Activated T-helper 2 cell treated with anti-CD3 and anti-CD28 coated beads, Interferon-gamma antibody, Interleukin-2, Interleukin-4, amounts not matched to agents 10 μg/mL and 5 μg/mL and 100 μg/mL, durations not matched to agents 14 hours and 24 hours and 36 hours (primary cell): ENCODE measurements at regions of chr7 and their contacts with region 1.

Region 1: DNA sequence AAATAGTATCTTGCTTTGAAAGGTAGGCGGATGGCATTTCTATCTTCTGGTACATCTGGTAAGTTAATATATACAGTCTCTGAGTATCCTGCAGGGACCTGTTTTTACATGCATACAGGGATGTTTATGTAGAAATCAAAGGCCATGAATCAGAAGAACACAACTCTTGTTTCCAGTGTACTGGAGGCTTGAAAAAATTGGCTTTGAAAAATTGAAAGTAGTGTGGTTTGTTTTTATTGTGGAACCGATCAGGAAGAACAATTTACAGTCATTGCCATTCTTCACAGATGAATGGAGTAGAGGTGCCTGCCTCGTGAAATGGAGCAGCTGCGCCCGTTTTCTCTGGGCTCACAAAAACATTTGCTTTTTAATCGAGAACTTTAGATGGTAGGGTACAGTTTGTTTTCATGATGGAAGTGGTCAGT is 54.0 kb upstream of the RPA3 start:
- DNase-seq: no peak
- H3K4me3 Mint-ChIP-seq: peak overlapping the region; percentile 40
- H3K27ac Mint-ChIP-seq: no peak overlapping the region
- H3K4me1 Mint-ChIP-seq: peaks cover 19% of the 10 kb centered on the region
- H3K27me3 Mint-ChIP-seq: no peaks in the 10 kb centered on the region

Region 2: DNA sequence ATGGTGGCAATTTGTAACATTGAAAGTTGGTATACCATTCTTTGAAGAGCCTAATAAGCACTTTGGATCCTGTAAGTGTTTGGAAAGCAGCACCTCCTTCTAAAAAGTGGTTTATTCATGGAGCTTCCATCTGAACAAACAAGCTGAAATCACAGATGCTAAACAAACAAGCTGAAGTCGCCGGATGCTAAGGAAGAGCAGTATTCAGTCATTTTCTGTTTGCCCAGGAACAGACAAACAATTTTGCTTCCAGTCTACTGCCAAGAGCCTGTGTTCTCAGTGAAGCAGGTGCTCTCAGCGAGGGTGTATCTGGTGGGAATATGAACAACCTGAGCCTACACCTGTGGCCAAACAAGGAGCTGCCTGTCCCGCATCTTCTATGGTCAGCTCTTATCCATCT is 243.1 kb before region 1 on chr7:
- intact Hi-C with region 1: no loop called
- DNase-seq: no peak
- H3K4me3 Mint-ChIP-seq: no peak overlapping the region
- H3K27ac Mint-ChIP-seq: no peak overlapping the region
- H3K4me1 Mint-ChIP-seq: no peaks in the 10 kb centered on the region
- H3K27me3 Mint-ChIP-seq: peaks cover 15% of the 10 kb centered on the region

Region 3: DNA sequence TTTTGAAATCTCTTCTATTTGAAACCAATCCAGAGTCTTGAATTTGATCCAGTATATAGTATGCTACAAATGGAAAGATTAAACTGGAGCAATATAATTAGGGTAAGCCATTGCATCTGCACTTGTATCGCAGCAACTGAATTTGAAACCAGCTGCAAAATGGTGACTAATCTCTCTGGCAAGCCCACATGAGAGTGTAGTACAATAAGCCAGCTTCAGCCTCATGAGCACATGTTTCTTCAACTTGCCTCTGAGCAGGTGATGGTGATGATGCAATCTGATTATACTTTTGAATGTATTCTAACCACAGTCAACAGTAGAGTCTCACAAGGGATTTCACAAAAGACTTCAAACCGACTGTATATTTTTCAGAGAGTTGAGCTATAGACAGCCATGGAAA is 53.2 kb before region 1 on chr7:
- intact Hi-C with region 1: loop called (anchors 2 kb)
- DNase-seq: peak; percentile 45
- H3K4me3 Mint-ChIP-seq: no peak overlapping the region
- H3K27ac Mint-ChIP-seq: peak overlapping the region; percentile 47
- H3K4me1 Mint-ChIP-seq: peaks cover 23% of the 10 kb centered on the region
- H3K27me3 Mint-ChIP-seq: no peaks in the 10 kb centered on the region

Region 4: GRCh38 chr7:7789551-7789988 is 17.2 kb after region 1 on chr7:
- intact Hi-C with region 1: loop called (anchors 1 kb)
- DNase-seq: no peak
- H3K4me3 Mint-ChIP-seq: no peak overlapping the region
- H3K27ac Mint-ChIP-seq: no peak overlapping the region
- H3K4me1 Mint-ChIP-seq: peaks cover 20% of the 10 kb centered on the region
- H3K27me3 Mint-ChIP-seq: no peaks in the 10 kb centered on the region

Region 5: GRCh38 chr7:7996576-7996975 is 224.2 kb after region 1 on chr7:
- intact Hi-C with region 1: no loop called
- DNase-seq: no peak
- H3K4me3 Mint-ChIP-seq: no peak overlapping the region
- H3K27ac Mint-ChIP-seq: peak overlapping the region; percentile 1
- H3K4me1 Mint-ChIP-seq: peaks cover 14% of the 10 kb centered on the region
- H3K27me3 Mint-ChIP-seq: no peaks in the 10 kb centered on the region

Region 6: GRCh38 chr7:8042796-8043535 is 270.6 kb after region 1 on chr7:
- intact Hi-C with region 1: loop called (anchors 10 kb)
- DNase-seq: no peak
- H3K4me3 Mint-ChIP-seq: no peak overlapping the region
- H3K27ac Mint-ChIP-seq: peak overlapping the region; percentile 49
- H3K4me1 Mint-ChIP-seq: peaks cover 56% of the 10 kb centered on the region
- H3K27me3 Mint-ChIP-seq: no peaks in the 10 kb centered on the region